ENCODE measurements at regions of chr6 and their contacts with region 1.

Region 1: GRCh38 chr6:134640975-134641429 is 308.9 kb downstream of the ALDH8A1 start:
- DNase-seq: peak; percentile 26 to 93 (median 84)

Region 2: GRCh38 chr6:134317471-134318131 is 323.4 kb before region 1 on chr6 and contains the start of gene SGK1:
- intact Hi-C with region 1: loop called (anchors 10 kb)
- DNase-seq: peak; percentile 55 to 93 (median 78)

Region 3: DNA sequence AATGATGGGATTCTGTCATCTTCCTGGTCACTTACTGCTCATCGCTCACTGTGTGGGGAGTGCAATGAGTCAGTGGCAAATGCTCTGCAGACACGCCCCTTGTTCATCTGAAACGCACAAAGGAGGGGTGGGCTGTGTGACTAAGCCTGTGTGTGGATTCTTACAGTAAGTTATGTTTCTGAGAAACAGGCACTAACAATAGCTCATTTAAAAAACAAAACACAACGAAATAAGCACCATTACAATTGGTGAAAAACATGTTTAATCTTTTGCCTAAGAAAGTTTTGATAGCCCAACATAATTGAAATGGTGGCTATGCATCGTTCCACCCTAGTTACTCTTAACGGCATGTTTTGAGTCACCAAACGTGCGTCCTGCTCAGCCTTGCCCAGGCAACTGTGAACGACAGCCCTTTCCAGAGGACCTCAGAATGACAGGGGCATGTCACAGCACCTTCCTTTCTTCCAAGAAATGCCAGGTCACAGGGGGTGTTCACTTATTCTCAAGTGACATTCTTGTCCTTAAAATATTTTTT is 204.7 kb before region 1 on chr6:
- intact Hi-C with region 1: loop called (anchors 5 kb)
- DNase-seq: peak; percentile 38 to 94 (median 79)

Region 4: DNA sequence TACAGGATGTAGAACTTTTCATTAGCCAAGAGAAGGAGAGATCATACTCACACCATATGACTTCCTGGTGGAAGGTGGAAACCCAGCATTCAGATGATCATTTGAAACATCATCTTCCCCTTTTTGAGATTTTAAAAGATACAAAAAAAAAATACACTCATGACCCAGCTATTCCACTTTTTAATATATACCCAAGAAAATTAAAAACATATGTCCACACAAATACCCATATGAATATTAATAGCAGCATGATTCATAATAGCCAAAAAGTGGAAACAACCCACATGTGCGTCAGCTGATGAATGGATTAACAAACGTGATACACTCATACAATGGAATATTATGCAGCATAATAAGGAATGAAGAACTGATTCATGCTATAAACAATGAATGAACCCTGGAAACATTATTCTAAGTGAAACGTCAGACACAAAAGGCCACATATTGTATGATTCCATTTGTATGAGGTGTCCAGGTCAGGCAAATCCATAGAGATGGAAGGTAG is 193.1 kb before region 1 on chr6:
- intact Hi-C with region 1: no loop called
- DNase-seq: no peak

Region 5: DNA sequence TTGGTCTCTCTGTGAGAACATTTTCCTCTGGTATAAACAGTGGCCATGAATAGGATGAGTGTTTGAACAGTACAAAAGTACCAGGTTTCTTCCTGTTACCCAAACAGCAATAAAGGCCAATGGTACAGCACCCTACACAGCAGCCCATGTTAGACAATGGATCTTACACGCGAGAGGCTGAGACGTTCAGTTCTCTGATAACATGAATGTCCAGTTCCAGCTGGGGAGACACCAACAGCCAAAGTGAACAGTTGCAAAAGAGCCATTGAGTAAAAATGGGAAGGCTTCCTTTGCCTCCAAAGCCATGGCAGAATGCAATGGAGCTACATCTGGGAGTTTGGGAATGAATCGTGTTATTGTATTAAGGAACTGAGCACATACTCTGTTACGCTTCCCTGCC is 76.3 kb before region 1 on chr6:
- intact Hi-C with region 1: no loop called
- DNase-seq: peak; percentile 28 to 95 (median 80)

Measured in head of caudate nucleus (tissue), 42 donors.